ENCODE measurements at regions of chr15 and their contacts with region 1.

Region 1: GRCh38 chr15:30073915-30074314 is 8.8 kb upstream of the GOLGA8J start:
- DNase-seq: no peak
- ATAC-seq: no peak
- H3K4me3 ChIP-seq: no peak overlapping the region
- H3K4me3 Mint-ChIP-seq: no peak overlapping the region
- H3K27ac ChIP-seq: no peak overlapping the region
- H3K27ac Mint-ChIP-seq: no peak overlapping the region
- H3K4me1 ChIP-seq: no peaks in the 10 kb centered on the region
- H3K4me1 Mint-ChIP-seq: peaks cover 0 to 4% (median 0%) of the 10 kb centered on the region in 7 donors
- H3K27me3 ChIP-seq: no peaks in the 10 kb centered on the region
- H3K27me3 Mint-ChIP-seq: peaks cover 13 to 41% (median 24%) of the 10 kb centered on the region in 5 donors

Region 2: GRCh38 chr15:29139540-29140459 is 934.1 kb before region 1 on chr15:
- CTCF ChIA-PET with region 1: no interaction called
- POLR2A ChIA-PET with region 1: no interaction called
- intact Hi-C with region 1: loop called in 1 of 2 experiments (anchors 10 kb)
- DNase-seq: peak; percentile 19 to 72 (median 51)
- ATAC-seq: peak; percentile 81
- H3K4me3 ChIP-seq: no peak overlapping the region
- H3K4me3 Mint-ChIP-seq: peak overlapping the region in 9 of 10 donors; percentile 5 to 70 (median 46)
- H3K27ac ChIP-seq: no peak overlapping the region
- H3K27ac Mint-ChIP-seq: no peak overlapping the region
- H3K4me1 ChIP-seq: peaks cover 0 to 7% of the 10 kb centered on the region in 2 donors
- H3K4me1 Mint-ChIP-seq: peaks cover 5 to 17% (median 11%) of the 10 kb centered on the region in 7 donors
- H3K27me3 ChIP-seq: peaks cover 0 to 11% of the 10 kb centered on the region in 2 donors
- H3K27me3 Mint-ChIP-seq: peaks cover 12 to 64% (median 54%) of the 10 kb centered on the region in 5 donors

Region 3: DNA sequence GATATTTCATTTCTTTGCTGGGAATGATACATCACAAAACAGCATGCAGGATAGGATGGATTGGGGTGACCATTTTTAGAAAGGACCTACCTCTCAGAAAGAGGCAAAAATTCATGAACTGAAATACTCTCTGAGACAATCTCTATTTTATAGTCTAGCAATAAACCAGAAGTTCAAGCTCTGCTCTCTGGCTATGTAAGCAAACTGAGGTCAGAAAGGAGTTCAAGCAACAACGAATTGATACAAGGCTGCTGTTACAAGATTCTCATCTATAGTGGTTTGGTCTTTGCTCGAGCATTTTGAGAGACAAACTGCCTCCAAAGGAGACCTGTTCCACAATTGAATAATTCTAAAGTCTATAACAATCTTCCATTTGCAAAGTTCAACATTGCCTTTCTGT is 75.9 kb before region 1 on chr15:
- CTCF ChIA-PET with region 1: no interaction called
- POLR2A ChIA-PET with region 1: no interaction called
- intact Hi-C with region 1: no loop called
- DNase-seq: no peak
- ATAC-seq: no peak
- H3K4me3 ChIP-seq: no peak overlapping the region
- H3K4me3 Mint-ChIP-seq: no peak overlapping the region
- H3K27ac ChIP-seq: no peak overlapping the region
- H3K27ac Mint-ChIP-seq: no peak overlapping the region
- H3K4me1 ChIP-seq: no peaks in the 10 kb centered on the region
- H3K4me1 Mint-ChIP-seq: no peaks in the 10 kb centered on the region
- H3K27me3 ChIP-seq: no peaks in the 10 kb centered on the region
- H3K27me3 Mint-ChIP-seq: peaks cover 0 to 31% (median 17%) of the 10 kb centered on the region in 5 donors

Region 4: DNA sequence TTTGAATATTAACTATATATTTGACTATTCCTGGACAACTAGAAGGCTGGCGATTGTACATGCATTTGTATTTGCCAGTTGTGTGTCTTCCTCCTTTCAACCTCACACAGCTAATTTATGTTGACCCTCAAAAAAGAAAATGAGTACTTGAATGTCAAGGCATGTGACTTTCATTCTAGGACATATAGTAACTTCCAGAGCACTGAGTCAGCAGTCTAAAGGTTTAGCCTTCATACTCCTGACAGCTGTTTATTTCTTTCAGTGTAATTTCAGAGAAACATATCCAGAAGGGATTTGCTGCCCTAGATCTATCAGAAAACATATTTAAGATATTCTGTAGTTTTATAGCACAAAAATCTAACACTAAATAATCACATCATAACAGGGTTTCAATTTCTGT is 65.8 kb before region 1 on chr15:
- CTCF ChIA-PET with region 1: no interaction called
- POLR2A ChIA-PET with region 1: no interaction called
- intact Hi-C with region 1: no loop called
- DNase-seq: no peak
- ATAC-seq: no peak
- H3K4me3 ChIP-seq: no peak overlapping the region
- H3K4me3 Mint-ChIP-seq: no peak overlapping the region
- H3K27ac ChIP-seq: no peak overlapping the region
- H3K27ac Mint-ChIP-seq: no peak overlapping the region
- H3K4me1 ChIP-seq: no peaks in the 10 kb centered on the region
- H3K4me1 Mint-ChIP-seq: no peaks in the 10 kb centered on the region
- H3K27me3 ChIP-seq: no peaks in the 10 kb centered on the region
- H3K27me3 Mint-ChIP-seq: peaks cover 0 to 22% (median 15%) of the 10 kb centered on the region in 5 donors

Region 5: DNA sequence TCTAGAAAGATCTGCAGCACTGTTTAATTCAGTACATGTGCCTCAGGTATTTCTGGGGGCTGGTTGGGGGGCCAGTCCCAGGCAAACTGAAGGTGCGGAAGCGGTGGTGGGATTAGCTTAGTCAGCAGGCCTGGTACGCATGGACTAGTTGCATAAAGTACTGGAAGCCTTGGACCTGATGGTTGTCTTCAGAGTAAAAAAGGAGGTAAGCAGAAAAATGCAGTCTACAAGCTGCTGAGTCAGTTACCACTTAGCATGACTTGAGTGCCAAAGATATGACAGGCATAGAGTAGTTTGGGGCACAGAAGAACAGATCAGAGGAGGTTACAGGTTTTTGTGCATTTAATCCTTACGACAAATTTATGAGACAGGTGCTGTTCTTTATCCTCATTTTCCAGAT is 11.0 kb before region 1 on chr15:
- CTCF ChIA-PET with region 1: no interaction called
- POLR2A ChIA-PET with region 1: no interaction called
- intact Hi-C with region 1: no loop called
- DNase-seq: no peak
- ATAC-seq: no peak
- H3K4me3 ChIP-seq: no peak overlapping the region
- H3K4me3 Mint-ChIP-seq: no peak overlapping the region
- H3K27ac ChIP-seq: no peak overlapping the region
- H3K27ac Mint-ChIP-seq: no peak overlapping the region
- H3K4me1 ChIP-seq: no peaks in the 10 kb centered on the region
- H3K4me1 Mint-ChIP-seq: no peaks in the 10 kb centered on the region
- H3K27me3 ChIP-seq: no peaks in the 10 kb centered on the region
- H3K27me3 Mint-ChIP-seq: peaks cover 0 to 24% (median 10%) of the 10 kb centered on the region in 5 donors